GM23248 (cell line): ENCODE measurements at regions of chr3 and their contacts with region 1.

Region 1: GRCh38 chr3:153161138-153161713 is 800 bp upstream of the RAP2B start:
- DNase-seq: peak; percentile 100
- H3K4me3 ChIP-seq: peak overlapping the region; percentile 97
- H3K27ac ChIP-seq: peak overlapping the region; percentile 91
- H3K4me1 ChIP-seq: peaks cover 22% of the 10 kb centered on the region
- H3K27me3 ChIP-seq: no peaks in the 10 kb centered on the region

Region 2: GRCh38 chr3:153043729-153044328 is 117.4 kb before region 1 on chr3:
- in situ Hi-C with region 1: loop called (anchors 10 kb)
- DNase-seq: peak; percentile 81
- H3K4me3 ChIP-seq: peak overlapping the region; percentile 70
- H3K27ac ChIP-seq: peak overlapping the region; percentile 76
- H3K4me1 ChIP-seq: peaks cover 24% of the 10 kb centered on the region
- H3K27me3 ChIP-seq: no peaks in the 10 kb centered on the region

Region 3: DNA sequence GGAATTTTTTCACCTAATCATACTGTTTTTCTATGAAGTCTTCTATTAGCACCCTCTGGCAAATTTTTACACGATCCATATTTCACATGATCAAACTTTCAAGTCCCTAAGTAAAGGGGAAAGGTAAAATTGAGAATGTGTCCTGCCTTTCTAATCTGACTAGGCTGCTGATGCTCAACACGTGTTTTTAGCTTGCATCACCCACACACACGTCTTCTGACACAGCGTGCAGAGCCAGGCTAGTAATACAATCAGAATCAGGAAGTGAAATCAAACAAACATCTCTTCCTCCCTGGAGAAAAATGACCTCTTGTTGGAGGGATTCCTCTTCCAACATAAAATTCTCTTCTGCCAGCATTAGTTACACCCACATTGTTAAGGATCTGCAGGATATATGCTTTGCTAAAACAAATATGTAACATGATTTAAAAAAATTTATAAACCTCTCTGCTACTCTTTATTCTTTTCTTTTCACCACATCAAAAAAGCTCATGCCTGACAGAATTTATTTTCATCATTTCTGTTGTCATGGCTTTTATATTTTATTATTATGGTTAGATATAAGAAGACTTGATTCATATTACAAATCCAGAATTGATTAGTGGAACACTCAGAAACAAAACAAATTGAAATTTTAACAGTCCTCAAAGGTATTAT is 123.2 kb after region 1 on chr3:
- in situ Hi-C with region 1: loop called (anchors 10 kb)
- DNase-seq: peak; percentile 96
- H3K4me3 ChIP-seq: peak overlapping the region; percentile 16; the same call in 1 of the 2 replicates
- H3K27ac ChIP-seq: peak overlapping the region; percentile 82
- H3K4me1 ChIP-seq: peaks cover 30% of the 10 kb centered on the region
- H3K27me3 ChIP-seq: no peaks in the 10 kb centered on the region

Region 4: GRCh38 chr3:153595186-153595815 is 434.1 kb after region 1 on chr3:
- in situ Hi-C with region 1: loop called (anchors 10 kb)
- DNase-seq: peak; percentile 66
- H3K4me3 ChIP-seq: no peak overlapping the region
- H3K27ac ChIP-seq: no peak overlapping the region
- H3K4me1 ChIP-seq: peaks cover 12% of the 10 kb centered on the region
- H3K27me3 ChIP-seq: no peaks in the 10 kb centered on the region

Region 5: GRCh38 chr3:153768561-153769469 is 607.6 kb after region 1 on chr3:
- in situ Hi-C with region 1: loop called (anchors 25 kb)
- DNase-seq: peak; percentile 70
- H3K4me3 ChIP-seq: no peak overlapping the region
- H3K27ac ChIP-seq: no peak overlapping the region
- H3K4me1 ChIP-seq: no peaks in the 10 kb centered on the region
- H3K27me3 ChIP-seq: no peaks in the 10 kb centered on the region